ENCODE measurements at regions of chr3 and their contacts with region 1.

Region 1: GRCh38 chr3:72270072-72270681 is 485.2 kb upstream of the PROK2 start:
- DNase-seq: peak; percentile 58
- H3K4me3 ChIP-seq: no peak overlapping the region
- H3K27ac ChIP-seq: peak overlapping the region; percentile 50
- H3K4me1 ChIP-seq: peaks cover 23% of the 10 kb centered on the region
- H3K27me3 ChIP-seq: no peaks in the 10 kb centered on the region
- CTCF ChIP-seq: no peak

Region 2: DNA sequence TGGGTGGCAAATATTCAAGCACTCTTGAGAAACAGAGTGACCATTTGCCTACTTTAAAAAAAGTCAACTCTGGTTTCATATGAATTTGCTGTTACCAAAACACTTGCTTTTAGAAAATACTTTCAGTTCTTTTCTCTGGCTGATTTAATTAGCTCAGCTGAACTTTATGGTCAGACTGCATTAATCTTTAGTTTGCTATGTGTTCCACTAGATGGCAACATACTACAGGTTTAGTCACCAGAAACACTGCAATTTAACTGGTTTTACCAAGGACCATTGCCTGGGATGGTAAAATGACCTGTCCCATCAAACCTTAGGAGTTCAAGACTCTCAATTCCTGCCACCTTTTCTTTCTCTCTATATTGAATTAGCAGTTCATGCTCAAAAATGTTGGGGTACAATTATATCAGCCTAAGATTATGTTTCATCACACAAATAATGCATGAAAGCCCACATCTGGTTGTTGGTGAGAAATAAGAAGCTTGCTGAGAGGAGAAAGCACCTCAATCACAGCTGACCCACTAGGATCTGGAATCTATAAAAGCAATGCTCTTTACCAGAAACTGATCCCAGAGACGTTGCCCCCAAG is 559.2 kb before region 1 on chr3:
- CTCF ChIA-PET with region 1: no interaction called
- POLR2A ChIA-PET with region 1: no interaction called
- intact Hi-C with region 1: loop called (anchors 10 kb)
- DNase-seq: peak; percentile 47
- H3K4me3 ChIP-seq: no peak overlapping the region
- H3K27ac ChIP-seq: no peak overlapping the region
- H3K4me1 ChIP-seq: no peaks in the 10 kb centered on the region
- H3K27me3 ChIP-seq: no peaks in the 10 kb centered on the region
- CTCF ChIP-seq: peak; percentile 54

Region 3: GRCh38 chr3:71875461-71875947 is 394.7 kb before region 1 on chr3:
- CTCF ChIA-PET with region 1: no interaction called
- POLR2A ChIA-PET with region 1: no interaction called
- intact Hi-C with region 1: loop called (anchors 10 kb)
- DNase-seq: peak; percentile 70
- H3K4me3 ChIP-seq: no peak overlapping the region
- H3K27ac ChIP-seq: no peak overlapping the region
- H3K4me1 ChIP-seq: no peaks in the 10 kb centered on the region
- H3K27me3 ChIP-seq: no peaks in the 10 kb centered on the region
- CTCF ChIP-seq: peak; percentile 72

Measured in A673 (cell line).